B cell (primary cell): ENCODE measurements at regions of chr9 and their contacts with region 1.

Region 1: GRCh38 chr9:1047591-1048230 is 2.4 kb upstream of the DMRT2 start:
- DNase-seq: peak; percentile 46
- ATAC-seq: no peak
- H3K4me3 ChIP-seq: peak overlapping the region; percentile 23 to 70 (median 45)
- H3K4me3 Mint-ChIP-seq: peak overlapping the region; percentile 89
- H3K27ac ChIP-seq: no peak overlapping the region
- H3K27ac Mint-ChIP-seq: no peak overlapping the region
- H3K4me1 ChIP-seq: peaks cover 47 to 57% of the 10 kb centered on the region in 2 donors
- H3K4me1 Mint-ChIP-seq: peaks cover 40% of the 10 kb centered on the region
- H3K27me3 ChIP-seq: peaks cover 0 to 92% (median 79%) of the 10 kb centered on the region in 4 experiments
- H3K27me3 Mint-ChIP-seq: peaks cover 74% of the 10 kb centered on the region
- CTCF ChIP-seq: no peak

Region 2: GRCh38 chr9:967903-968641 is 79.6 kb before region 1 on chr9:
- CTCF ChIA-PET with region 1: no interaction called
- POLR2A ChIA-PET with region 1: no interaction called
- intact Hi-C with region 1: loop called (anchors 5 kb)
- DNase-seq: no peak
- ATAC-seq: no peak
- H3K4me3 ChIP-seq: no peak overlapping the region
- H3K4me3 Mint-ChIP-seq: no peak overlapping the region
- H3K27ac ChIP-seq: no peak overlapping the region
- H3K27ac Mint-ChIP-seq: no peak overlapping the region
- H3K4me1 ChIP-seq: peaks cover 24 to 27% of the 10 kb centered on the region in 2 donors
- H3K4me1 Mint-ChIP-seq: peaks cover 3% of the 10 kb centered on the region
- H3K27me3 ChIP-seq: peaks cover 0 to 79% (median 68%) of the 10 kb centered on the region in 4 experiments
- H3K27me3 Mint-ChIP-seq: peaks cover 58% of the 10 kb centered on the region
- CTCF ChIP-seq: no peak

Region 3: DNA sequence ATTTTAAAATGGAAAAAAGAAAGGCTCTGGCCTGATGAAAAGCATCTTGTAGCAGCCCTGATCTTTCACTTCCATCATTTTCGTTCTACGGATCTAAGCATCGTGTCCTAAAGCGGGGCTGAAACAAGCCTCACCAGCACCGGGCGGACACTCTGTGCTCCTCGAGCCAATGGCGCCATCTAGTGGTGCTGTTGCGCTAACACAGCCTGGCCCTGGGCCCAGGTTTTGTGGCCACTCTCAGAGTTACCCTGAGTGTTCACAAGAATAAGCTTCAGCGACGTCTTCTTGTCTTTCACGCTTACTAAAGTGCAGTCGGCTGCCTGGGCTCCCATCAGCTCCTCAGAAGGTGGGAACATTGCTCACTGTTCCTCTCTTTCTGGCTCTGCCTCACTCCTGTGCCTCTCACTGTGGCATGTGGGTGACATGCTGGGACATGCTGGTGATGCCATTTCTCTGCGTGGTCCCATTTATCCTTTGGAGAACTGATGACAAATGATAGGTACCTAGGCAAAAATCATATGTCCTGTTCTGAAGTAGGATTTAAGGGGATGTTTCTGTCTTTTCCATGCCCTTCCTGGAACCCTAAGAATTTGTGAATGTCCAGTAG is 38.5 kb before region 1 on chr9:
- CTCF ChIA-PET with region 1: no interaction called
- POLR2A ChIA-PET with region 1: no interaction called
- intact Hi-C with region 1: no loop called
- DNase-seq: peak; percentile 74
- ATAC-seq: peak; percentile 89
- H3K4me3 ChIP-seq: no peak overlapping the region
- H3K4me3 Mint-ChIP-seq: no peak overlapping the region
- H3K27ac ChIP-seq: no peak overlapping the region
- H3K27ac Mint-ChIP-seq: no peak overlapping the region
- H3K4me1 ChIP-seq: peaks cover 3% of the 10 kb centered on the region in 2 donors
- H3K4me1 Mint-ChIP-seq: no peaks in the 10 kb centered on the region
- H3K27me3 ChIP-seq: peaks cover 0 to 17% (median 0%) of the 10 kb centered on the region in 4 experiments
- H3K27me3 Mint-ChIP-seq: peaks cover 46% of the 10 kb centered on the region
- CTCF ChIP-seq: peak; percentile 93

Region 4: DNA sequence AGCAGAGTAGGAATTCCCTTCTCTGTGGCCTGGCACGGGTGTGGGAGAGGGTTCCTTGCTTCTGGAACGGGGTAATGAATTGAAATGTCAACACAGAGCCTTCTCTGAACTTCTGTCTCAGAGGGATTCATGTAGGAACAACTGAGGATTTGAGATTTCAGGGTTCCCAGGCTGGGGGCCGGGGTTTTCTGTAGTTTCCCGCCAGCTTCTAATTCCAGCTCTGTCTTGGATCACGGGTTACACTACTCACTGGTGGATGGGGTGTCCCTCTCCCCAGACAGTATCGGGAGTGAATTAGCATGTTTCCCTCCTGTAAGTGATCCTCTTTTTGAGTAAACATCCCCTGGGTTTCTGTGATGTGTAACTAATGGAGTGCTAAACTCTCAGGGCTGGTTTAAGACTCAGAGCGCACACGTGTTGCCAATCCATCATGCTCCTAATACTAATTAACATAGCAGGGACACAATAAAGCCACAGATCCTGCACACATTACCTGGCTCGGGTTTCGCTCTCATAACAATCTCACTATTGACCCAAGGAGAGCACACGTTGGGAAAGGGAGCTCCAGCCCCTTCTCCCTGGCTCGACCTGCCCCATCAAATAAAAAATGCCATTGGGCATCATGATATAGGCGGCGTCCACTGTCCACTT is 15.6 kb before region 1 on chr9:
- CTCF ChIA-PET with region 1: no interaction called
- POLR2A ChIA-PET with region 1: no interaction called
- intact Hi-C with region 1: no loop called
- DNase-seq: no peak
- ATAC-seq: no peak
- H3K4me3 ChIP-seq: no peak overlapping the region
- H3K4me3 Mint-ChIP-seq: no peak overlapping the region
- H3K27ac ChIP-seq: no peak overlapping the region
- H3K27ac Mint-ChIP-seq: no peak overlapping the region
- H3K4me1 ChIP-seq: no peaks in the 10 kb centered on the region
- H3K4me1 Mint-ChIP-seq: no peaks in the 10 kb centered on the region
- H3K27me3 ChIP-seq: peaks cover 0 to 5% (median 2%) of the 10 kb centered on the region in 4 experiments
- H3K27me3 Mint-ChIP-seq: peaks cover 44% of the 10 kb centered on the region
- CTCF ChIP-seq: no peak

Region 5: GRCh38 chr9:1057910-1058309 is 10.2 kb after region 1 on chr9:
- CTCF ChIA-PET with region 1: no interaction called
- POLR2A ChIA-PET with region 1: no interaction called
- intact Hi-C with region 1: no loop called
- DNase-seq: no peak
- ATAC-seq: no peak
- H3K4me3 ChIP-seq: no peak overlapping the region
- H3K4me3 Mint-ChIP-seq: no peak overlapping the region
- H3K27ac ChIP-seq: no peak overlapping the region
- H3K27ac Mint-ChIP-seq: no peak overlapping the region
- H3K4me1 ChIP-seq: peaks cover under 1 to 7% of the 10 kb centered on the region in 2 donors
- H3K4me1 Mint-ChIP-seq: no peaks in the 10 kb centered on the region
- H3K27me3 ChIP-seq: peaks cover 0 to 26% (median 17%) of the 10 kb centered on the region in 4 experiments
- H3K27me3 Mint-ChIP-seq: peaks cover 54% of the 10 kb centered on the region
- CTCF ChIP-seq: no peak

Region 6: GRCh38 chr9:1248743-1249142 is 201.0 kb after region 1 on chr9:
- CTCF ChIA-PET with region 1: no interaction called
- POLR2A ChIA-PET with region 1: no interaction called
- intact Hi-C with region 1: no loop called
- DNase-seq: no peak
- ATAC-seq: no peak
- H3K4me3 ChIP-seq: no peak overlapping the region
- H3K4me3 Mint-ChIP-seq: no peak overlapping the region
- H3K27ac ChIP-seq: no peak overlapping the region
- H3K27ac Mint-ChIP-seq: no peak overlapping the region
- H3K4me1 ChIP-seq: no peaks in the 10 kb centered on the region
- H3K4me1 Mint-ChIP-seq: no peaks in the 10 kb centered on the region
- H3K27me3 ChIP-seq: no peaks in the 10 kb centered on the region
- H3K27me3 Mint-ChIP-seq: no peaks in the 10 kb centered on the region
- CTCF ChIP-seq: no peak